Heart right ventricle (tissue), 16 donors: ENCODE measurements at regions of chr12 and their contacts with region 1.

Region 1: GRCh38 chr12:72037006-72037795 is 98.6 kb downstream of the TPH2 start:
- DNase-seq: no peak
- ATAC-seq: no peak
- H3K4me3 ChIP-seq: no peak overlapping the region
- H3K27ac ChIP-seq: no peak overlapping the region
- H3K4me1 ChIP-seq: no peaks in the 10 kb centered on the region
- H3K27me3 ChIP-seq: peaks cover 0 to 8% (median 0%) of the 10 kb centered on the region in 7 donors
- CTCF ChIP-seq: no peak

Region 2: GRCh38 chr12:71045781-71046180 is 991.4 kb before region 1 on chr12:
- intact Hi-C with region 1: loop called in 1 of 10 experiments (anchors 5 kb)
- DNase-seq: no peak
- ATAC-seq: peak in 7 of 8 donors; percentile 21 to 66 (median 47)
- H3K4me3 ChIP-seq: no peak overlapping the region
- H3K27ac ChIP-seq: no peak overlapping the region
- H3K4me1 ChIP-seq: peaks cover 0 to 11% (median 0%) of the 10 kb centered on the region in 9 donors
- H3K27me3 ChIP-seq: no peaks in the 10 kb centered on the region
- CTCF ChIP-seq: no peak

Region 3: DNA sequence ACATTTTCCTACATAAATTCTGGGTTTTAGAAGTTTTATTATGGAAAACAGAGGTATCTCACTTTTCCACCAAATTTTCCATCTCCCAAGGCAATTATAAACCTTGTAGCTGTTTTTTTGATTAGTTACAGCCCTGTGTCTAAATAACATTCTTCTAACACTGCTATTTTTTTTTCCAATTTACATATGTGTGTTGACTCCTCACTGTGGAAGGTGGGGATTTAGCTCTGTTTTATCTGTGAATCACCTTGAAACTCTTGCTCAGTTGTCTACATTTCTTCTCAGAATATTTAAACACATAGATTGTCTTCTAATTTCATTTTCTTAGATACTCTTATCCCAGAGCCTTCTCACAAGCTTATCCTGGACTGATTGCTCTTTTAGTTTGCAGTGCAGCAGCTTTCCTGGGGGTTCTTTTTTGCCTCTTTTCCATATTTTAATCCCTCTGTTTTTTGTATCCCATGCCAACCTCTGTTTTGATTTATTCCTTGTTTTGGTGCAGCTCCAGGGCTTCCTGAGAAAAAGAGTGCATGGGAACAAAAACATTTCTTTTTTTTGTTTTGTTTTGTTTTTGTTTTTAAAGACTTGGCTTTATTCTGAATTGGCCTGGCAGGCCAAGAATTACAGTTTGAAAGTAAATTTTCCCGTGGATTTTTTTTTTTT is 160.9 kb before region 1 on chr12:
- intact Hi-C with region 1: no loop called
- DNase-seq: no peak
- ATAC-seq: peak in 1 of 8 donors; percentile 14
- H3K4me3 ChIP-seq: no peak overlapping the region
- H3K27ac ChIP-seq: peak overlapping the region in 4 of 10 donors; percentile 1 to 35 (median 12)
- H3K4me1 ChIP-seq: peaks cover 0 to 54% (median 19%) of the 10 kb centered on the region in 9 donors
- H3K27me3 ChIP-seq: no peaks in the 10 kb centered on the region
- CTCF ChIP-seq: no peak